Tibial artery (tissue), 4 donors: ENCODE measurements at regions of chr20 and their contacts with region 1.

Region 1: DNA sequence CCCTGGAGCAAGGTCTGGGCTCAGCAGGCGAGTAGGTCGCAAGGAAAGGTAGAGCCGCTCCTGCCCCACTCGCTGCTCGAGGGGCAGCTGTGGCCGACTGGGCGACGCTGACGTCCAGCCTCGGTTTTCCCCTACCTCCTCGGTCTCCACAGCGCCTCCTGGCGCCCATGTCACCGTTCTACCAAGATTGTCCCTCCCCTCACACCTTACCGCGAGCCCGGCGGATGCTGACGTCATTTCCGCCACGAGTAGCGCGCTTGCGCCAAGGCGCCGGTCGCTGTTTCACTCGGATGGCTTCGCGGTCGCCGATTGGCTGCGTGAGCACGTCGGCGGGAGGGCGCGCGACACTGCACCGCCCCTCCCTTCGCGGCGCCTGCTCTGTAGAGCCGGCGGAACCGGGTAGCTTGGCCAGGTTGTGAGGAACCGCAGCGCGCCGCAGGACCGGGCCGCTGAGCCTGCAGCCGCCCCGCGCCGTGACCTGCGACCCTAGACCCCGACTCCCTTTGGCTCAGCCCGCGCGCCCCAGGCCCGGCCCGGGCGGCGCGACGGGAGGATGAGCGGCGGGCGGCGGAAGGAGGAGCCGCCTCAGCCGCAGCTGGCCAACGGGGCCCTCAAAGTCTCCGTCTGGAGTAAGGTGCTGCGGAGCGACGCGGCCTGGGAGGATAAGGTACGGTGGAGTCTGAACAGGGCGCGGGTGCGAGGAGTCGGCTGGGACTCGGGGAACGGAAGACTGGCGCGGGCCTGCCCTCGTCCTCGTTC is at the start of gene RAB5IF:
- DNase-seq: peak; percentile 98 to 99
- H3K4me3 ChIP-seq: peak within 1 kb of the TSS; percentile 75 to 99
- H3K27ac ChIP-seq: peak within 1 kb of the TSS; percentile 76 to 77
- H3K4me1 ChIP-seq: peaks cover 0 to 24% (median 18%) of the 10 kb centered on the region in 4 donors
- H3K27me3 ChIP-seq: no peaks in the 10 kb centered on the region
- CTCF ChIP-seq: peak; percentile 85 to 94

Region 2: DNA sequence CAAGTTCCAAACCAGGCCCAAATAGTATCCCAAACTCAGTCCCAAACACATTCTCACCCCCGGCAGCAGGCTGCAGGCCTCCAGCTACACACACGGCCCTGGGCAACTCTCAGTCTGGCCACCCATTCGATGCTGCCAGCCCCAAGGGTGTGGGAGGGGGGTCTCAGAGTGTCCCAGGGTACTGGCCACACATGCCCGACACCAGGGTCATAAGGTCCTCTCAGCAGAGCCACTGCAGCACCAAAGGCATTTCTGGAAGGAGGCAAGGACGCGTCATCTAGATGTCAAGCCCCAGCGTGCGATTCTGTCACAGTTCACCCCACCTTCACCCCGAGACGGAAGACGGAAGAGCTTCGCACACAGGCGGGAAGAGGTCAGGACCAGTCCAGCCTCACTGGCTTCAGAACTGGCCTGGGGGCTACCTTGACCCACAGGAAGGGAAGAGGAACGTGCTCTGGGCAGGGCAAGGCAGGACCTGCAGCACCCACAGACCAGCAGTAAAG is 54.7 kb before region 1 on chr20:
- intact Hi-C with region 1: loop called (anchors 10 kb)
- DNase-seq: peak in 1 of 2 donors; percentile 83
- H3K4me3 ChIP-seq: no peak overlapping the region
- H3K27ac ChIP-seq: peak overlapping the region; percentile 34 to 99
- H3K4me1 ChIP-seq: peaks cover 0 to 54% (median 36%) of the 10 kb centered on the region in 4 donors
- H3K27me3 ChIP-seq: no peaks in the 10 kb centered on the region
- CTCF ChIP-seq: no peak

Region 3: DNA sequence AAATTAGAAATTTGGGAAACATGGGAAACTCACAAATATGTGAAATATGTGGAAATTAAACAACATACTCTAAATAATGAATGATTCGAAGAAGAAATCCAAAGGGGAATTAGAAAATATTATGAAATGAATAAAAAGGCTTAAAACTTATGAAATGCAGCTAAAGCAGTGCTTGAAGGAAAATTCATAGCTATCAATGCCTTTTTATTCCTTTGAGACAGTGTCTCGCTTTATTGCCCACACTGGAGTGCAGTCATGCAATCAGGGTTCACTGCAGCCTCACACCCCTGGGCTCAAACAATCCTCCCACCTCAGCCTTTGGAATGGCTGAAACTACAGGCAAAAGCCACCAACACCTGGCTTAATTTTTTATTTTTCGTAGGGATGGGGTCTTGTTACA is 40.1 kb before region 1 on chr20:
- intact Hi-C with region 1: no loop called
- DNase-seq: no peak
- H3K4me3 ChIP-seq: no peak overlapping the region
- H3K27ac ChIP-seq: no peak overlapping the region
- H3K4me1 ChIP-seq: no peaks in the 10 kb centered on the region
- H3K27me3 ChIP-seq: no peaks in the 10 kb centered on the region
- CTCF ChIP-seq: no peak